Activated B cell treated with CpG ODN at 0.5 μM for 24 hours (primary cell): ENCODE measurements at regions of chr4 and their contacts with region 1.

Region 1: DNA sequence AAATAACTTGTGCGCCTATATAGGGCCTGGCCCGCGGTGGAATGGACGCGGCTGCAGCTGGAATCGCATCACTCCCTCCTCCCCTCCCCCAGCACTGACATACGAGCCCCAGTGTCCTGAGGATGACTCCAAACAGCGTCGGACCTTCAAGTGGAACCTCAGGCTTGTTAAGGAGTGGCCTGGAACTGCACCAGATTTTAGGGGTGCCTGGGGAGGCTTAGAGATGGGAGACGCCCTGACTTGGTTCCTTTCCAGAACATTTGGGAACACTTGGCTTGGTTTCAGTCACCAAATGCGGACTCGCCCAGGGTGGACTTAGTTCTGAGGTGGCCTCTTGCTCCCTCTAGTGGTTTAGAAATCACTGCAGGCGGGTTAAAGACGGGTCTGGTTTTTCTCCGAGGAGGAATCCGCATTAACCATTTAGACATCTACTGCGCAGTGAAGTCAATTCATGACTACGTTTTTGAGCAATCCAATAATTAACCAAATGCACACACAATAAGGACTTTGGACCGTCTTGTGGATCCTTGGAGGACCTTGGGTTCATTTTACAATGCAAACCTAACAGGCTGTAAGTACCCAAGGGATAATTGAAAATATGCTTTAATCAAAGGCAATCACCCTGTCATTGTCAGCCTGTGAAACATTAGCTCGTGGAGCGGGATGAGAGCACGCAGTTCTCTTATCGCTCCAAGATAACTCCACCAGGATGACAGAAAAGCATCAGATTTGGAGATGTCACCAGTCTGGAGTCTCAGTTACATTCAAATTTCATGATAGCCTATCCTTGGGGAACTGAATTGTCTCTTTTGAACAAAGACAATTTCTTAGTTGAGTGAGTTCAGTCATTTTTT is 11.2 kb upstream of the PDGFRA start:
- DNase-seq: peak; percentile 27
- ATAC-seq: peak; percentile 66
- H3K4me3 Mint-ChIP-seq: peak overlapping the region; percentile 16
- H3K27ac Mint-ChIP-seq: no peak overlapping the region
- H3K4me1 Mint-ChIP-seq: peaks cover 4% of the 10 kb centered on the region
- H3K27me3 Mint-ChIP-seq: peaks cover 23% of the 10 kb centered on the region
- CTCF ChIP-seq: no peak

Region 2: GRCh38 chr4:53490965-53491622 is 726.8 kb before region 1 on chr4:
- CTCF ChIA-PET with region 1: no interaction called
- POLR2A ChIA-PET with region 1: no interaction called
- intact Hi-C with region 1: loop called (anchors 5 kb)
- DNase-seq: no peak
- ATAC-seq: no peak
- H3K4me3 Mint-ChIP-seq: no peak overlapping the region
- H3K27ac Mint-ChIP-seq: no peak overlapping the region
- H3K4me1 Mint-ChIP-seq: no peaks in the 10 kb centered on the region
- H3K27me3 Mint-ChIP-seq: peaks cover 7% of the 10 kb centered on the region
- CTCF ChIP-seq: no peak

Region 3: DNA sequence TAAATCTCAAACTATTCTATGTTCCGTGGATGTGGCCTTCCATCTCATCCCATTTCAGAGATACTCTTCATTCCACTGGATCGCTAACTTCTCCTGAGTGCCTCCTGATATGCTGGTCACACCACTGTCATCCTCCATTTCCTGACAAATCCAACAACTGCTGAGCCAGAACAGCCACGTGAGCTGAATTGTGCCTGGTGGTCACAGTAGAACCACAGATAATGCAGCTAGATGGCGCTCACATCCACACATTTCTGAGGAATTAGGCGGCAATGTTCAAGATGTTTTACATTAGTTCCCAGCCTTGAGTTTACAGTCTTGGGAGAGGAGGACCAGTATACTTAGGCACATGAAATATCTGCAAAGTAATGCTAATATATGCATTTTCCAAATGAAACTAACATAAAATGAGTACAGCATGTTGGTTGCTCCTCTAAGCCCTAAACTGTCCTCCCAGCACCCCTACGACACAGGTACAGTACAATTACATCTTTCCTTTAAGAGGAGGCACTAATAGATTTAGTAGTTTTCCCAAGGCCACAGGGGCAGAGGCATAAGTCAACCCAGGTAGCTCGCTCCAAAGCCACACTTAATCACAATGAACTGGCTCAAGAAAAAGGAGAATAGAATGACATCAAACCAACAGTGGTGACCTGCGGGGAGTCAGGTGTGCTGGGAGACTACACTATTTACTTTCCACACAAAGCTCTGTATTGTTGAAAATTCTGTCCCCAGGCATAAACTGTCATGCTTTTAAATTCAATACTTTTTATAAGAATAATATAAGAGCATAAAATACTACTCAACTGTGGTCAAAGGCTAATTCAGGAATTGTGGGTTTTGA is 287.7 kb before region 1 on chr4:
- CTCF ChIA-PET with region 1: interaction called, 64 read pairs
- POLR2A ChIA-PET with region 1: no interaction called
- intact Hi-C with region 1: loop called (anchors 1 kb)
- DNase-seq: no peak
- ATAC-seq: no peak
- H3K4me3 Mint-ChIP-seq: no peak overlapping the region
- H3K27ac Mint-ChIP-seq: no peak overlapping the region
- H3K4me1 Mint-ChIP-seq: no peaks in the 10 kb centered on the region
- H3K27me3 Mint-ChIP-seq: peaks cover 9% of the 10 kb centered on the region
- CTCF ChIP-seq: no peak

Region 4: GRCh38 chr4:54296548-54297203 is 78.8 kb after region 1 on chr4:
- CTCF ChIA-PET with region 1: no interaction called
- POLR2A ChIA-PET with region 1: no interaction called
- intact Hi-C with region 1: no loop called
- DNase-seq: no peak
- ATAC-seq: no peak
- H3K4me3 Mint-ChIP-seq: no peak overlapping the region
- H3K27ac Mint-ChIP-seq: no peak overlapping the region
- H3K4me1 Mint-ChIP-seq: no peaks in the 10 kb centered on the region
- H3K27me3 Mint-ChIP-seq: peaks cover 3% of the 10 kb centered on the region
- CTCF ChIP-seq: no peak